GM12878 (cell line): ENCODE measurements at regions of chr1 and their contacts with region 1.

Region 1: GRCh38 chr1:160675641-160676410 is 29.0 kb upstream of the SLAMF1 start:
- DNase-seq: peak; percentile 76
- ATAC-seq: peak; percentile 88
- H3K4me3 ChIP-seq: peak overlapping the region; percentile 2; the same call in 1 of the 2 replicates
- H3K27ac ChIP-seq: peak overlapping the region; percentile 62
- H3K4me1 ChIP-seq: peaks cover 48% of the 10 kb centered on the region
- H3K27me3 ChIP-seq: no peaks in the 10 kb centered on the region
- CTCF ChIP-seq: peak; percentile 86 to 95 (median 92)
- EP300 ChIP-seq: peak in 1 of 2 experiments; percentile 10; a peak in 1 of 4 replicates
- POLR2A ChIP-seq: peak; percentile 31; the same call in 1 of the 2 replicates
- RAD21 ChIP-seq: peak; percentile 87

Region 2: DNA sequence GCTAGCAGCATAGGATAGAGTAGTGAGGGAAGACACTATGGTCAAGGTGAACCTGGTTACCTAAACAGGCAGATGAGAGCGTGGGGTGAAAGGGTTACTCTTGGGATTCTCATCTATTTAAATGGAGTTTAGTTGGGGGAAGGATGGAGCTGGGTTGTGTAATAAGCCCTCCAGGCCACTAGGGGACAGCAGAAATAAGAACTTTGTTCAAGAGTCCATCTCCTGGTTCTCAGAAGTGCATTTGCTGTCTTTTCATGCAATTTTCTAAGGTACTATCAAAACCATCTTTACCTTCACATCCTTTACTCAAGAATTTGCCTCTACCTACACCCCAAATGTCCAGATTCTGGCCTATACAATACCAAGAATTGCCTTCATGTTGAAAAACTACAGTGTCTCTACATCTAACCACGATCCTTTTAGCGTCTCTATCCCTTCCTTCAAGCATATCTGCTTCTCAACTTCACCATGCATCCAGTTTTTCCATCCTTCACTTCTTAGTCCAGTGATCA is 57.0 kb before region 1 on chr1:
- CTCF ChIA-PET with region 1: interaction called, 92 read pairs
- POLR2A ChIA-PET with region 1: interaction called, 7 read pairs
- RAD21 ChIA-PET with region 1: interaction called, 132 read pairs
- SMC1A ChIA-PET with region 1: interaction called, 82 read pairs
- in situ Hi-C with region 1: no loop called
- intact Hi-C with region 1: loop called (anchors 2 kb)
- DNase-seq: no peak
- ATAC-seq: peak; percentile 54
- H3K4me3 ChIP-seq: no peak overlapping the region
- H3K27ac ChIP-seq: no peak overlapping the region; the same call in 1 of the 2 replicates
- H3K4me1 ChIP-seq: peaks cover 28% of the 10 kb centered on the region
- H3K27me3 ChIP-seq: no peaks in the 10 kb centered on the region
- CTCF ChIP-seq: peak; percentile 72 to 88 (median 82)
- EP300 ChIP-seq: no peak
- POLR2A ChIP-seq: no peak
- RAD21 ChIP-seq: peak; percentile 75

Region 3: GRCh38 chr1:160637821-160638539 is 37.8 kb before region 1 on chr1:
- CTCF ChIA-PET with region 1: interaction called, 8 read pairs
- POLR2A ChIA-PET with region 1: interaction called, 10 read pairs
- RAD21 ChIA-PET with region 1: interaction called, 20 read pairs
- SMC1A ChIA-PET with region 1: interaction called, 32 read pairs
- in situ Hi-C with region 1: no loop called
- intact Hi-C with region 1: no loop called
- DNase-seq: no peak
- ATAC-seq: peak; percentile 29
- H3K4me3 ChIP-seq: peak overlapping the region; percentile 56
- H3K27ac ChIP-seq: peak overlapping the region; percentile 77
- H3K4me1 ChIP-seq: peaks cover 56% of the 10 kb centered on the region
- H3K27me3 ChIP-seq: no peaks in the 10 kb centered on the region
- CTCF ChIP-seq: no peak
- EP300 ChIP-seq: 0 out of 4 replicates have a peak, but pooled peaks have one; percentile 32 to 36
- POLR2A ChIP-seq: no peak
- RAD21 ChIP-seq: no peak

Region 4: DNA sequence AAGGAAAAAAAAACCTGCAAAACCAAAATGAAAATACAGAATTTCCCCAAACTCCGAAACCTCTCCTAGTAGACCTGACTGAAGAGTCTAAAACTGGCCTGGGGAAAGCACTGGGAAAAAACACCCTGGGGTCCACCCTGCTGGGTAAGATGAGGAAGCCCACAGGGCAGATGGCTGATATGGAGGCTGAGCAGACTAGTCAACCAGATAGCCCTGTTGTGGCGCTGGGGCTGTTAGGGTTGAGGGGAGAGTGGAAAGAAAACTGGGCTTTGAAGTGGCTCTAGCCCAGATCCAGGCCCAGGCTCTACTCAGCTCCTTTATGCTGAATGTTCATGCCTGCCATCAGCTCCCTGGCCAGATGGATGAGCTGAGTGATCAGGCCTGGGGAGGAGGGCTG is 22.2 kb before region 1 on chr1:
- CTCF ChIA-PET with region 1: interaction called, 18 read pairs
- POLR2A ChIA-PET with region 1: interaction called, 61 read pairs
- RAD21 ChIA-PET with region 1: interaction called, 117 read pairs
- SMC1A ChIA-PET with region 1: interaction called, 187 read pairs
- in situ Hi-C with region 1: no loop called
- intact Hi-C with region 1: no loop called
- DNase-seq: no peak
- ATAC-seq: peak; percentile 71
- H3K4me3 ChIP-seq: peak overlapping the region; percentile 37; the same call in 1 of the 2 replicates
- H3K27ac ChIP-seq: peak overlapping the region; percentile 75
- H3K4me1 ChIP-seq: peaks cover 66% of the 10 kb centered on the region
- H3K27me3 ChIP-seq: no peaks in the 10 kb centered on the region
- CTCF ChIP-seq: no peak
- EP300 ChIP-seq: no peak
- POLR2A ChIP-seq: no peak
- RAD21 ChIP-seq: no peak

Region 5: DNA sequence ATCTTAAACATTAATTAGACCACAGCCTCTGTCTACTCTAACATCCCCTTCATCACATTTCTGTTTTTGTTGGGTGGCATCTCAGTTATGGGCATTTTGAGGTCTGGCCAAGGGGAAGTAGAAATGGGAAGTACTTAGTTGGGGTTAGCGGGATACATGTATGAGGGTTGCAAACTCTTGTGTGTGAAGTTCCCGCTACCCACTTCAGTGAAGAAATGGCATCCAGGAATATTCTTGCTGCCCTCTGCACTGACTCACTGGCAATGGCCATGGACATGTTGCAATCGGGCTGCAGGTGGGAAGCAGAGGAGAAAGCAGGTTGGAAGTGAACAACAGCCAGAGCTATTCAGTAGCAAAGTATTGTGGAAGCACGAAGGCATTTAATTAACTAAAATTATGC is 28.4 kb after region 1 on chr1:
- CTCF ChIA-PET with region 1: interaction called, 59 read pairs
- POLR2A ChIA-PET with region 1: interaction called, 27 read pairs
- RAD21 ChIA-PET with region 1: interaction called, 42 read pairs
- SMC1A ChIA-PET with region 1: interaction called, 79 read pairs
- in situ Hi-C with region 1: no loop called
- intact Hi-C with region 1: no loop called
- DNase-seq: no peak
- ATAC-seq: peak; percentile 1; the same call in 1 of the 3 replicates
- H3K4me3 ChIP-seq: peak overlapping the region; percentile 59
- H3K27ac ChIP-seq: peak overlapping the region; percentile 3; the same call in 1 of the 2 replicates
- H3K4me1 ChIP-seq: peaks cover 7% of the 10 kb centered on the region; the same call in 1 of the 2 replicates
- H3K27me3 ChIP-seq: no peaks in the 10 kb centered on the region
- CTCF ChIP-seq: no peak
- EP300 ChIP-seq: no peak
- POLR2A ChIP-seq: no peak
- RAD21 ChIP-seq: no peak

Region 6: DNA sequence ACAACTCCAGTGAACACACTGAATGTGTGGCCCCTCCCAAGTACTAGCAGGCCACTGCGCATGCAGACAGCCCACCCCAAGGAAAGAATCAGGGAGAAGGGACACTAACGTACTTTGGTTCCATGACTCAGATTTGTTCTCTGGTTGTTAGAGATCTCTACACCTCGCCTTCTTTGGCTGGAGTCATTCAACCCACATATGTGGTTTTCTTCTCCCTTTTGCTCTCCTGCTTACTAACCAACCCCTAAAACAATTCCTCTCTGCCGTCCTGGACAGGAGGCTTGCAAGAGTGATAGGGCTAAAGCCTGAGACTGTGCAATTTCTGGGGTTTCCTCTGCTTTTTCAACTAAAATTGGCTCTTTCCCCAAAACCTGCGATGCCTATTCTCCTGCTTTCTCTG is 41.5 kb after region 1 on chr1:
- CTCF ChIA-PET with region 1: interaction called, 95 read pairs
- POLR2A ChIA-PET with region 1: interaction called, 6 read pairs
- RAD21 ChIA-PET with region 1: interaction called, 12 read pairs
- SMC1A ChIA-PET with region 1: interaction called, 70 read pairs
- in situ Hi-C with region 1: no loop called
- intact Hi-C with region 1: loop called (anchors 5 kb)
- DNase-seq: no peak
- ATAC-seq: no peak
- H3K4me3 ChIP-seq: no peak overlapping the region
- H3K27ac ChIP-seq: no peak overlapping the region
- H3K4me1 ChIP-seq: peaks cover 14% of the 10 kb centered on the region
- H3K27me3 ChIP-seq: no peaks in the 10 kb centered on the region
- CTCF ChIP-seq: no peak
- EP300 ChIP-seq: no peak
- POLR2A ChIP-seq: no peak
- RAD21 ChIP-seq: no peak

Region 7: DNA sequence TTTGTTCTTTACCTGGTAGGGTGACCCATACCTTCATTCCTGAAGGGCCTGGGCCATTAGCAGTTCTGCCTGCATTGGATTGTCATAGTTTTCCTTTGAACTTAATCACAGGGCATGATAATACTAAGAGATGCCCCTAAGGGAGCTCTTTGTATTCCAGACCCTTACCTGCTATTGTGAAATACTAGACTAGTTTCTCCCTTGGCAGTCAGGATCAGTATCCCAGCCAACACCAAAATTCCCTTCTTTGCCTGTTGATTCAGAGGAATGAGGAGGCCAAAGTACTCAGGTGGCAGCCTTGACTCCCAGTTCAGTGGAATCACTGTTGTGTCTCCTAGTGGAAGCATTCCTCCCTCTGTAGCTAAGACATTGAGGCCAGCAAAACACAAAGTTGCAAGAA is 83.9 kb after region 1 on chr1:
- CTCF ChIA-PET with region 1: no interaction called
- POLR2A ChIA-PET with region 1: no interaction called
- RAD21 ChIA-PET with region 1: no interaction called
- SMC1A ChIA-PET with region 1: no interaction called
- in situ Hi-C with region 1: no loop called
- intact Hi-C with region 1: no loop called
- DNase-seq: no peak
- ATAC-seq: no peak
- H3K4me3 ChIP-seq: no peak overlapping the region
- H3K27ac ChIP-seq: no peak overlapping the region
- H3K4me1 ChIP-seq: peaks cover 17% of the 10 kb centered on the region
- H3K27me3 ChIP-seq: no peaks in the 10 kb centered on the region
- CTCF ChIP-seq: no peak
- EP300 ChIP-seq: no peak
- POLR2A ChIP-seq: no peak
- RAD21 ChIP-seq: no peak

Region 8: DNA sequence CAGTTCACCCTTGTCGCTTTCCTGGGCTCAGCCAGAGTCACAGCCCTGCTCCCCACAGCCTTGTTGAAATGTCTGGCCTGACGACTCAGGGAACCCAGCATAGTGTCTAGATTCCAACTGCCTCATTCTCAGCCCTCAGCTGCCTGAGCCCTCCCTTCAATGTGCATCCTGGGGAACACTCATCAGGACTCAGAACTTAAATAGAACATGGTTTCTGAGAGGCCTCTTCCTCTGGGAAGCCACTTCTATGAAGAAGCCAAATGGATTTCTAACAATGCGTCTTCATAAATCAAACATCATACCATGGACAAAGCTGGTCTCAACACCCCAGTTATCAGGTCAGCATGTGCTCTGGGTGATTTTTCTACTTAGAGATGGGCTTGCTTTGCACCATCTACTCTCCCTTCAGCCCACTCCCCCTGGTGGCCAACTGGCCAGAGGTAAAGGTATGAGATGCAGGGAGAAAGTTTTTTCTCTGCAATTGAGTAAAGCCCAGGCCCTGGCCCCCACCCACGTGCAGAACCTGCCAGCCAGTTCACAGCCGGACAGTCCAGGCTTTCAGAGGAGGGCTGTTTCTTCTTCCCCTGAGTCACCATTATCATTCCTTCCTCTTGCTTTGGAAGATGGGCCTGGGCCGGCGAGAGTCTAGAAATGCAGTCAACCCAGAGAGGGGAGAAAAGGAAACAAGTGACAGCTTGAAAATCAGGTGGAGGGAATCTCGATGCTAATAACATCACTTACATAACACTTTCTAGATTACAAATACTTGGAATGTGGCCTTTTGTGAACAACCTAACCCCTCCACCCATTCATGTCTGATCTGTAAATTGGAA is 154.7 kb after region 1 on chr1:
- CTCF ChIA-PET with region 1: interaction called, 14 read pairs
- POLR2A ChIA-PET with region 1: interaction called, 3 read pairs
- RAD21 ChIA-PET with region 1: interaction called, 3 read pairs
- SMC1A ChIA-PET with region 1: interaction called, 7 read pairs
- in situ Hi-C with region 1: no loop called
- intact Hi-C with region 1: loop called (anchors 2 kb)
- DNase-seq: no peak
- ATAC-seq: peak; percentile 98
- H3K4me3 ChIP-seq: no peak overlapping the region
- H3K27ac ChIP-seq: no peak overlapping the region
- H3K4me1 ChIP-seq: no peaks in the 10 kb centered on the region
- H3K27me3 ChIP-seq: no peaks in the 10 kb centered on the region
- CTCF ChIP-seq: peak; percentile 67 to 87 (median 76)
- EP300 ChIP-seq: no peak
- POLR2A ChIP-seq: no peak
- RAD21 ChIP-seq: peak; percentile 84